ENCODE measurements at regions of chr4 and their contacts with region 1.

Region 1: DNA sequence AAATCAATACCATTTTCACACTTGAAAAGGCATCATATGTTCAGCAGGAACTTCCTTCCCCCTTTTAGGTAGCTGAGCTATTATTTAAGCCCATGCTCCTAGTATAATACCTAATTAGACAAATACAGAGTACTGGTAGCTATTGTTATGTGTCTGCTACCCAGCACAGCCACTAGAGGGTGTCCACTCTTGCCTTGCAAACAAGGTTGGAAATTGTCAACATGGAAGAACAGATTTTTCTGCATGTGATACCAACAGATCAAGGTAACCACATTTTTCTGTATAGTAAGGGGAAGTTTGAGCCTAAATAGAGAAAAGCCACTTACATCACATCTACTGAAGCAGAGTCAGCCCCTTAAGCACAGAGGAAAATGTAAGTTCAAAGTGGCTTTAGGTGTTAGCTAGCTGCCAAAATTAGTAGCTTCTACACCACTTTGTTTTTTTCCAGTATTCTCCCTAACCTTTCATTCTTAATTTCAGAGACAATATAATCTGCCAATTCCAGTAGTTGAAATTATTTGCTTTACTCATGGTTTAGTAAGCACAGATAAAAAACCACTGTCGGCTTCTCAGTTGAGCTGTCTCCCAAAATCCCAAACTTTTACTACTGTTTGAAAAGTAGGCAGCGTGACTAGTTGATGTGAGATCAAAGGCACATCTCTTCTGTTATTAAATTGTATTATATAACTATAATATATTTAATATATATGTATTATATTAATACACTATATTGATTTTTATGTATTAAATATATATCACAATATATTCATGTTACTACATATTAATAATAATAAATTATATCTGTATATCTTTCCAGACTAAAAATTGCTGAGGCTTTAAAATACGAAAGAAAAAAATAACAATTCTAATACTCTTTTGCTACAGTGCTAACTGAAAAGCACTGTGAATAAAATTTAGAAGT is 38.2 kb downstream of the EDNRA start:
- DNase-seq: peak; percentile 77
- H3K4me3 Mint-ChIP-seq: no peak overlapping the region
- H3K27ac Mint-ChIP-seq: no peak overlapping the region
- H3K4me1 Mint-ChIP-seq: peaks cover 21% of the 10 kb centered on the region
- H3K27me3 Mint-ChIP-seq: no peaks in the 10 kb centered on the region
- CTCF ChIP-seq: peak; percentile 77

Region 2: DNA sequence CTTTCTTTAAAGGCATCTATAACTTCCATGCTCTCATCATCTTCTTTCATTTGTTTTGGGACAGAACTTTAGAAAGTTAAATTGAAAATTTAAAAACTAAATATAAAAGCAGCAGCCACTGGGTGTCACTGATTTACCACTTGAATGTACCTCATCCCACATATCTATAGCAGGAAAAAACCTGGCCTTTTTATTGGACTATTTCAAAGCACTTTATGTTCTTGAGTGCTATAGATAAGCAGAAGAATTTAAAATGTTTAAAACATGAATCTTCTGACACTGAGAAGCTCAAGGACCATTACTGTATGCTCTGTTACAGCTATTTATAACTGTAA is 408.1 kb before region 1 on chr4:
- CTCF ChIA-PET with region 1: interaction called, 5 read pairs
- POLR2A ChIA-PET with region 1: no interaction called
- intact Hi-C with region 1: loop called (anchors 2 kb)
- DNase-seq: no peak
- H3K4me3 Mint-ChIP-seq: no peak overlapping the region
- H3K27ac Mint-ChIP-seq: no peak overlapping the region
- H3K4me1 Mint-ChIP-seq: no peaks in the 10 kb centered on the region
- H3K27me3 Mint-ChIP-seq: no peaks in the 10 kb centered on the region
- CTCF ChIP-seq: peak; percentile 8

Region 3: GRCh38 chr4:147539959-147540358 is 20.9 kb after region 1 on chr4:
- CTCF ChIA-PET with region 1: interaction called, 37 read pairs
- POLR2A ChIA-PET with region 1: interaction called, 4 read pairs
- intact Hi-C with region 1: no loop called
- DNase-seq: no peak
- H3K4me3 Mint-ChIP-seq: no peak overlapping the region
- H3K27ac Mint-ChIP-seq: no peak overlapping the region
- H3K4me1 Mint-ChIP-seq: peaks cover 13% of the 10 kb centered on the region
- H3K27me3 Mint-ChIP-seq: no peaks in the 10 kb centered on the region
- CTCF ChIP-seq: no peak

Region 4: GRCh38 chr4:147560637-147561036 is 41.5 kb after region 1 on chr4:
- CTCF ChIA-PET with region 1: interaction called, 10 read pairs
- POLR2A ChIA-PET with region 1: no interaction called
- intact Hi-C with region 1: no loop called
- DNase-seq: peak; percentile 61
- H3K4me3 Mint-ChIP-seq: no peak overlapping the region
- H3K27ac Mint-ChIP-seq: peak overlapping the region; percentile 20
- H3K4me1 Mint-ChIP-seq: peaks cover 21% of the 10 kb centered on the region
- H3K27me3 Mint-ChIP-seq: no peaks in the 10 kb centered on the region
- CTCF ChIP-seq: no peak

Region 5: DNA sequence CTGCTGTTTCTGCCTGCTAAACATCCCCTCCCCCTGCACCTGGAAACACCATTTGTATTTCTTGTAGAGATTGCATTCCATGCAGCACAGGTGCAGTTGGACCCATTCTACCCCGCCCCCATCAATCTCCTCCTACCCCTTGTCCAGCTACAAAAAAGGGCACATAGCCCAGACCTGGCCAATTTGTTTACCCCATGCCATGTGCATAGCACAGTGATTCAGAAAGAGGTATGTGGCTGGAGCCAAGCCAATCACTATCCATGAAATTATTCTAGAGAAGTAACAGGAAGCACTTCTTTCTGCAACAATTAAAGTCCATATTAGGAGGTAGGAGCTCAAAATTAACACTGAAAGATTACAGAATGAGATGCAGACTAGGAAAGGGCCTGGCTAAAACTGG is 77.9 kb after region 1 on chr4:
- CTCF ChIA-PET with region 1: interaction called, 22 read pairs
- POLR2A ChIA-PET with region 1: no interaction called
- intact Hi-C with region 1: no loop called
- DNase-seq: peak; percentile 94
- H3K4me3 Mint-ChIP-seq: no peak overlapping the region
- H3K27ac Mint-ChIP-seq: peak overlapping the region; percentile 97
- H3K4me1 Mint-ChIP-seq: peaks cover 35% of the 10 kb centered on the region
- H3K27me3 Mint-ChIP-seq: no peaks in the 10 kb centered on the region
- CTCF ChIP-seq: no peak